SK-N-SH (cell line): ENCODE measurements at regions of chr7 and their contacts with region 1.

Region 1: DNA sequence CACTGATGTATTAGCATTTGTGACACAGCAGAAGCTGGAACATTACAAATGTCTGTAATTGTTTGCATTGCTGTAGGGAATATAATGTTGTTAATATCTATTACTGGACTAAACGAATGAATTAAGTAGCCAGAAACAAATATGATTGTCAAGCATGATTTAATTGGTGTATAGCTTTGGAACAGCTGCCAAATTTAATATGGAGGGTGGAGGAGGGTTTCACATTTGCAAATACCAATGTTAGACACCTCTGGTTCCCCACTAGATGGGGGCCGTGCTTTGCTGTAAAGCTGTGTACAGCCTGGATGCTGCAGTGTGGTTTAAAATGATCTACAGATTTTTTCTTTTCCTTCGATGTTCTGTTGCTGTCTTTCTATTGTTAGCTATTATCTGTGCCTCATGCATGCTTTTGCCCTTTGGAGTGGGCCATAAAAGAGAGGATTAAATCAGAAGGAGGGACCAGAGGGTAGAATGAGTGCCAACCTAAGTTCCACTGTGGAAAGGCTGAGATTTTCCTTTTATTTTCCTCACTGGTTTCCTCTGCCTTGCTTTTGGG is 23.1 kb downstream of the DNAJB9 start:
- DNase-seq: peak; percentile 76
- H3K4me3 ChIP-seq: no peak overlapping the region
- H3K27ac ChIP-seq: no peak overlapping the region
- H3K4me1 ChIP-seq: peaks cover 0 to 6% of the 10 kb centered on the region in 2 experiments; a peak in 2 of 4 replicates
- H3K27me3 ChIP-seq: no peaks in the 10 kb centered on the region
- CTCF ChIP-seq: peak; percentile 48
- EP300 ChIP-seq: peak in 1 of 2 experiments; percentile 80; a peak in 2 of 4 replicates
- RAD21 ChIP-seq: peak; percentile 95

Region 2: DNA sequence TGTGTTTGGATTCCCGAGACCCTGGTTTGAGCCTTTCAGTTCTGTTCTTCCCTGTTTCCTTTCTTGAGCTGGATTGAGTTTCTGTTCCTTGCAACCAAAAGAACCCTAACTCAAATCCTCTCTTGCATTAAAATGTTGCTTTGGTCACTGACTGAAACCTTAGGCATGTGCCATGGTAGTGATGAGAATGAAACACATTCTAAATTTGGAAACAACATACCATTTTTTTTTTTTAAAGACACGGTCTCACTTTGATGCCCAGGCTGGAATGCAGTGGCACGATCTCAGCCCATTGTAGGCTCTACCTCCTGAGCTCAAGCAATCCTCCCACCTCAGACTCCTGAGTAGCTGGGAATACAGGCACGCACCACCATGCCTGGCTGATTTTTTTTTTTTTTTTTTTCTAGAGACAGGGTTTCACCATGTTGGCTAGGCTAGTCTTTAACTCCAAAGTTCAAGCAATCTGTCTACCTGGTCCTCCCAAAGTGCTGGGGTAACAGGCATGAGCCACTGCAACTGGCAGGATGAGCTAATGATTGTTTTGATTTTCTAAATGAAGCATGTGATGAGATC is 31.6 kb before region 1 on chr7:
- CTCF ChIA-PET with region 1: no interaction called
- POLR2A ChIA-PET with region 1: no interaction called
- DNase-seq: no peak
- H3K4me3 ChIP-seq: no peak overlapping the region
- H3K27ac ChIP-seq: no peak overlapping the region
- H3K4me1 ChIP-seq: no peaks in the 10 kb centered on the region; a peak in 1 of 4 replicates
- H3K27me3 ChIP-seq: no peaks in the 10 kb centered on the region
- CTCF ChIP-seq: no peak
- EP300 ChIP-seq: no peak
- RAD21 ChIP-seq: no peak

Region 3: DNA sequence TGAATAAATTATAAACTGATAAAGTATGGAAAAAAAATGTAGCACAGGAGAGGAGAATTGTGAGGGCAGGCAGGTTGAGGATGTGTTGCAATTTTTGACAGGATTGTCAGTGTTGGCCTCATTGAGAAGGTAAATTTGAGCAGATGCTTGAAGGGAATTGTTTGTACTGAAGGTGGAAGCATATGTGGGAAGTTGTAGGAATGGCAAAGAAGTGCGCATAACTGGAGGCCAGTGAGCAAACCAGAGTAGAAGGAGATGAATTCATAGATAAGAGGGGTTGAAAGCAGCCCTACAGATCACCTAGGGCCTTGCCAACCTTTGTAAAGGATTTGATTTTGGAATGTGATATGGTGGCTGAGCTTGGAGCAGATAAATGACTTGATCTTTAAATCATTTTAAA is 16.6 kb before region 1 on chr7:
- CTCF ChIA-PET with region 1: interaction called, 15 read pairs
- POLR2A ChIA-PET with region 1: no interaction called
- DNase-seq: no peak
- H3K4me3 ChIP-seq: no peak overlapping the region
- H3K27ac ChIP-seq: no peak overlapping the region
- H3K4me1 ChIP-seq: peaks cover 7 to 16% of the 10 kb centered on the region in 2 experiments; a peak in 3 of 4 replicates
- H3K27me3 ChIP-seq: no peaks in the 10 kb centered on the region
- CTCF ChIP-seq: no peak
- EP300 ChIP-seq: no peak
- RAD21 ChIP-seq: no peak

Region 4: GRCh38 chr7:108605559-108606201 is 13.0 kb after region 1 on chr7:
- CTCF ChIA-PET with region 1: interaction called, 31 read pairs
- POLR2A ChIA-PET with region 1: no interaction called
- DNase-seq: no peak
- H3K4me3 ChIP-seq: no peak overlapping the region
- H3K27ac ChIP-seq: no peak overlapping the region
- H3K4me1 ChIP-seq: no peaks in the 10 kb centered on the region
- H3K27me3 ChIP-seq: no peaks in the 10 kb centered on the region; the same call in 1 of the 2 replicates
- CTCF ChIP-seq: no peak
- EP300 ChIP-seq: no peak
- RAD21 ChIP-seq: no peak

Region 5: GRCh38 chr7:108686494-108686893 is 93.8 kb after region 1 on chr7:
- CTCF ChIA-PET with region 1: no interaction called
- POLR2A ChIA-PET with region 1: no interaction called
- DNase-seq: no peak
- H3K4me3 ChIP-seq: no peak overlapping the region
- H3K27ac ChIP-seq: no peak overlapping the region
- H3K4me1 ChIP-seq: no peaks in the 10 kb centered on the region
- H3K27me3 ChIP-seq: no peaks in the 10 kb centered on the region
- CTCF ChIP-seq: no peak
- EP300 ChIP-seq: no peak
- RAD21 ChIP-seq: no peak